Colonic mucosa (tissue), 4 donors: ENCODE measurements at regions of chr10 and their contacts with region 1.

Region 1: GRCh38 chr10:52488606-52489485 is 174.8 kb downstream of the DKK1 start:
- DNase-seq: no peak
- H3K4me3 ChIP-seq: no peak overlapping the region
- H3K27ac ChIP-seq: no peak overlapping the region
- H3K4me1 ChIP-seq: no peaks in the 10 kb centered on the region
- H3K27me3 ChIP-seq: no peaks in the 10 kb centered on the region
- CTCF ChIP-seq: peak; percentile 48

Region 2: DNA sequence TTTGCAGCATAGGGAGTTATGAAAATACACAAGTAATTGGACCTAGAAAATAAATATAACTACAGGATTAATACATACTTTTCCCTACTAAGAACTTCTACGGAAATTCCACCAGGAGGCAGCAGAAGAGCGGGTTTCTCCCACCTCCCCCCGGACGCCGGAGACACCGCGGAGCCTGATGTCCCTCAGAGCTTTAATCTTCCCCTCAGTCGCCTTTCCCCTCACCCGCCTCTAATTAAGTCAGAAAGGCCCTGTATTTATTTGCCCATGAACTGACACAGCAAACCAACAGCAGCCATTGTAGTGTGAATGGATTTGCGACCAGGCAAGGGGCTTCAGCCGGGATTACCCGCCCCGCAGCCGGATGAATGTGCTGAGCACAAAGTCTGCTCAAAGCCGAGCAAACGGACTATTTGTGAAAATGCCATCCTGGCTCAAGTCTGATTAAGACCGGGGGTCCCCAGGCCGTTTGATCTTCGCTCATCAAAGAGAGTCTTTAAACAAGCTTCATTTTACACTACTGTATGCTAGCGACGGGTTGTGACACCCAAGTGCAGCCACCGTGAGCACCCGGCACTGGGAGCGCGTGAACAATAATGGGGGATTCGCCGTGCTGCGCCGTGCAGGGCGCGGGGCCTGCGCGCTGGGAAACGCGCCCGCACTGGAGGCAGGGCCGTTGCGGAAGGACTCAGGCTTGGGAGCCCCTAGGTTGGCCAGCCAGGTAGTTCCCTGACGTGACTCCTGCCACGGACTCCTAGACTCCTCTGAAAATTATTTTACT is 180.4 kb before region 1 on chr10:
- intact Hi-C with region 1: loop called (anchors 5 kb)
- DNase-seq: peak; percentile 35
- H3K4me3 ChIP-seq: peak overlapping the region; percentile 48
- H3K27ac ChIP-seq: no peak overlapping the region
- H3K4me1 ChIP-seq: no peaks in the 10 kb centered on the region
- H3K27me3 ChIP-seq: peaks cover 15% of the 10 kb centered on the region
- CTCF ChIP-seq: peak; percentile 55